ENCODE measurements at regions of chr16 and their contacts with region 1.

Region 1: GRCh38 chr16:81469710-81470535 is 25.3 kb downstream of the CMIP start:
- DNase-seq: peak; percentile 87
- H3K4me3 Mint-ChIP-seq: peak overlapping the region; percentile 66
- H3K27ac Mint-ChIP-seq: peak overlapping the region; percentile 89
- H3K4me1 Mint-ChIP-seq: peaks cover 56% of the 10 kb centered on the region
- H3K27me3 Mint-ChIP-seq: no peaks in the 10 kb centered on the region

Region 2: GRCh38 chr16:81444448-81445121 is 25.3 kb before region 1 on chr16 and contains the start of gene CMIP:
- intact Hi-C with region 1: loop called (anchors 2 kb)
- DNase-seq: peak; percentile 95
- H3K4me3 Mint-ChIP-seq: peak within 1 kb of the TSS; percentile 87
- H3K27ac Mint-ChIP-seq: peak within 1 kb of the TSS; percentile 90
- H3K4me1 Mint-ChIP-seq: peaks cover 40% of the 10 kb centered on the region
- H3K27me3 Mint-ChIP-seq: peaks cover 33% of the 10 kb centered on the region
- total RNA-seq, gene CMIP: 40.0 and 42.9 TPM in 2 replicates